ENCODE measurements at regions of chr11 and their contacts with region 1.

Region 1: DNA sequence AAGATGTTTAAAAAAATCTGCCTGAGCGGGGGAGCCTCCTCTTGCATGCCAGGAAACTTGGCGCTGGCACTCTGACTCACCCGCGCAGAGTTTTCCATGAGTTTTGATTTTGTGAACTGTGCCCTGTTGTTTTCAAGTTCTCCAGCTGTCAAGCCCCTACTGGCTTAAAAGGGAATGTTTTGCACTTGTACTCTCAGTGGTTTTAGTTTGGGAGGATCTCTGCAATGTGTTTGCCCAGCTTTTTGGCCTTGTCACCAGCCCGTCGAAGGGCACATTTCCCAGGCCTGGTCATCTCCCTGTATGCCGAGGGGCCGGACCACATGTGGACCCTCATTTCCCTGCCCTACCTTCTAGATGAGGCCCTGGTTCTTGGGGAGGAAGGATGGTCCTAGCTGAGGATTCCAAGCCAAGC is 12.2 kb downstream of the MRGPRF start:
- DNase-seq: peak; percentile 79 to 91
- H3K4me3 ChIP-seq: no peak overlapping the region
- H3K27ac ChIP-seq: peak overlapping the region; percentile 91 to 93
- H3K4me1 ChIP-seq: peaks cover 17 to 83% (median 72%) of the 10 kb centered on the region in 4 donors
- H3K27me3 ChIP-seq: no peaks in the 10 kb centered on the region
- CTCF ChIP-seq: peak; percentile 72 to 88

Region 2: DNA sequence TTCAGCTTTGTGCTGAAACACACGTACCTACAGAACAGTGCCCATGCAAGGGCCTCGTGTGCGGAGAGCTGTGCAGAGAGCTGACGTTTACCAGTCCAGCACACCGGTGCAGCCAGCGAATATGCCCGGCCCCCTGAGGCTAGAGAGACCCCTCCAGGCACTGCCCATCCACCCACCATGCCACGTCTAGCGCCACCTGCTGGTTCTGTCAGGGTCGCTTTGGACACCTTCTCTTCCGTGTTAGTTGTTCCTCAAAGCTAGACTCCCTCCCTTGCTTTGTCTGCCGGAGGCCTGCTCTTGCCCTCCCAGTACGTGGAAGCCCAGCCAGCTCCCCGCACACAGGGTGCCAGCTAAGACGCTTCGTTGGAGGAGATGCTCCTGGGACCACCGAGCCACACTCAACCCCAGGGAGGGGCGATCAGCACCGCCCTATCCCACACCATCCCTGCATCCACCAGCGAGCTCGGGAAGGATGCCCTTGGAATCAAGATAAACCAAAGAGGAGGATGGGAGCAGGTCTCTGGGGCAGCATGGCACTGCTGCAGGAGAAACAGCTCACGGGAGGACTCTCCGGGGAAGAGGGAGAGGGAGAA is 202.5 kb before region 1 on chr11:
- intact Hi-C with region 1: no loop called
- DNase-seq: no peak
- H3K4me3 ChIP-seq: no peak overlapping the region
- H3K27ac ChIP-seq: no peak overlapping the region
- H3K4me1 ChIP-seq: no peaks in the 10 kb centered on the region
- H3K27me3 ChIP-seq: no peaks in the 10 kb centered on the region
- CTCF ChIP-seq: peak; percentile 29 to 51

Region 3: GRCh38 chr11:68927280-68928135 is 73.3 kb before region 1 on chr11:
- intact Hi-C with region 1: loop called (anchors 10 kb)
- DNase-seq: no peak
- H3K4me3 ChIP-seq: no peak overlapping the region
- H3K27ac ChIP-seq: peak overlapping the region; percentile 48 to 55
- H3K4me1 ChIP-seq: peaks cover 0 to 49% (median 31%) of the 10 kb centered on the region in 4 donors
- H3K27me3 ChIP-seq: no peaks in the 10 kb centered on the region
- CTCF ChIP-seq: no peak